ENCODE measurements at regions of chr6 and their contacts with region 1.

Region 1: DNA sequence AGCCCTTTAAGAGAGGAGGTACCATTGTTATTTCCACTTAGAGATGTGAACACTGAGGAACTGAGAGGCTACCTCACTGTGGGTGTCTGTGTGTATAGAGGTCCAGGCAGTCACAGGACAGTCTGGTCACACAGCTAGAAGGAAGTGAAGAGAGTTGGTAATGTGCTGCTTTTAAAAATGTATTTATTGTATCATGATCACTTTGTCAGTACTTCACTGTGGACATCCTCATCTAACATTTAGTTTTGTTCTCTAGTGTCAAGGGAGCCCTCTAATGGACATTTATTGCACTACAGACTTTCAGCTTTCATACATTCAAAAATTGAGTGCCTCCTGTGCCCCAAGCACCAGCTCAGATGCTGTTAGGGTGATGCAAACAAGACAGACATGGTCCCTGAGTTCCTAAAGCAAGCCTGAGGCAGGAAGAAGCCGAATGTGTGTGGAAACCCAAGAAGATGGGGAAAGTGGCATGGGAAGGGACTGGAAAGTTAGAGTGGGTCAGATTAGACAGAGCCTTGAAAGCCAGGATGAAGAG is 123.0 kb downstream of the SLC16A10 start:
- DNase-seq: peak in 1 of 3 donors; percentile 63
- ATAC-seq: peak; percentile 81
- H3K4me3 ChIP-seq: no peak overlapping the region
- H3K4me1 ChIP-seq: no peaks in the 10 kb centered on the region
- CTCF ChIP-seq: no peak

Region 2: GRCh38 chr6:111057074-111057752 is 153.0 kb before region 1 on chr6:
- intact Hi-C with region 1: loop called in 1 of 2 experiments (anchors 10 kb)
- DNase-seq: peak in 1 of 3 donors; percentile 69
- ATAC-seq: peak; percentile 81
- H3K4me3 ChIP-seq: no peak overlapping the region
- H3K4me1 ChIP-seq: no peaks in the 10 kb centered on the region
- CTCF ChIP-seq: no peak

Region 3: GRCh38 chr6:111338843-111339242 is 128.6 kb after region 1 on chr6:
- intact Hi-C with region 1: no loop called
- DNase-seq: no peak
- ATAC-seq: no peak
- H3K4me3 ChIP-seq: no peak overlapping the region
- H3K4me1 ChIP-seq: no peaks in the 10 kb centered on the region
- CTCF ChIP-seq: no peak

Region 4: DNA sequence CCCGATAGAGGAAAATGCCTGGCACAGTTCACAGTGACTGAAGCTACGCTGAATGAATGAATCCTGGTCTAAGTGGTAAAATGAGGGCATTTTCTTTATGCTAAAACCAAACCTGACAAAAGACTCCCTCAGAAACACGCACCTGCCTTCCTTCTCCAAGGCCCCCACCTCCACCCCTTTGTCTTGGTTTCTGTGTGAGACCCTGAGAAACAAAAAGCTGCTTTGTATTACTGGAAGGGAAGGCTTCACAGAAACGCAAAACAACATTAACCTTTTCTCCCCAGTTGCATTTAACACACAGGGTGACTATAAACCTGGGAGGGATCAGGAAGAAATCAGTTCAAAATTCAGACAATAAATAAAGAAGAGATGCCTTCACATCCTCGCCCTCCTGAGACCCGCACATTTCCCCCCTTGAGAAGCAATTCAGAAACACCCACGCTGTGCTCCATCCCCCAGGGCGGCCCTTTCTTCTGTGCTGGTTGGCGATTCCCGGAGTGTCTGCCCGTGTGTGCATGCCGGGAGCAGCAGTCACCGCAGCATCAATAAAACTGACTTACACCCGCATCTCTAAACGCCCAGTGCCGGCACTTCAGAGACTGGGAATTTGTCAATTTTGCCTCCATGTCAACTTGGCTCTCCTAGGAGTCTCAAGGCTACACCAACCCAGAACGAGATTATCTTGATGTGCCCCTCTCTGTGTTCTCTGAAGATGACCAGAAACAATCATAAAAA is 462.7 kb after region 1 on chr6:
- intact Hi-C with region 1: no loop called
- DNase-seq: no peak
- ATAC-seq: peak; percentile 20
- H3K4me3 ChIP-seq: no peak overlapping the region
- H3K4me1 ChIP-seq: peaks cover 19% of the 10 kb centered on the region
- CTCF ChIP-seq: no peak

Measured in mucosa of descending colon (tissue), 3 donors.